ENCODE measurements at regions of chr10 and their contacts with region 1.

Region 1: DNA sequence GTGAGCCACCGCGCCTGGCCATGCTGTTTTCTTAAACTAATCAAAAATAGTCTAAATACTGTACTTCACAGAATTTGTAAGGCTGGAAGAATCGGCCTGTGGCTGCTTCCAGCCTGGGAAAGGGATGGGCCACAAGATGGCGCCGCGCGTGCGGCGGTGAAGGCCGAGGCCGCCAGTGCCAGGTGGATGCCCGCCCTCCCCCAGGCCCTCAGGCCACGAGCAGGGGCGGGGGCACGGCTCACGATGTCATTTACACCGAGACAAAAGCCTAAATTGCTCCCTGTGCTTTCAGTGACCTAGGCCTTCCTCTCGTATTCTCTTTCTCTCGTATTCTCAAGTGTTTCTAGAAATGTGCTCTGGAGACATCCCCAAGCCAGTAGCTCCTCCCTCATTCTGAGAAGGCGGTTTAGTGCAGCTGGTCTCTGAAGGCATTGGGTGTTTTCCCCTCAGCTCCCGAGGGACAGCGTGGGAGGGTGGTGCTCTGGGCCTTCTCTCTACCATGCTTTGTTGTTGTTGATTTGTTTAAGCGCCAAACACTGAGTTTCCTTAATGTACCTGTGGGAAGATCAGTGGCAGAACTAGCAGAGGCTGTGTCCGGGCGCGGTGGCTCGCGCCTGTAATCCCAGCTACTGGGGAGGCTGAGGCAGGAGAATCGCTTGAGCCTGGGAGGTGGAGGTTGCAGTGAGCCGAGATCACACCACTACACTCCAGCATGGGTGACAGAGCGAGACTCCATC is 68.4 kb downstream of the CDC123 start:
- DNase-seq: peak; percentile 73 to 86
- H3K4me3 ChIP-seq: peak overlapping the region; percentile 31; the same call in 1 of the 2 replicates
- H3K27ac ChIP-seq: peak overlapping the region; percentile 68
- H3K4me1 ChIP-seq: peaks cover 30% of the 10 kb centered on the region
- H3K27me3 ChIP-seq: no peaks in the 10 kb centered on the region
- CTCF ChIP-seq: peak; percentile 81

Region 2: GRCh38 chr10:12322583-12323131 is 58.3 kb after region 1 on chr10:
- CTCF ChIA-PET with region 1: no interaction called
- POLR2A ChIA-PET with region 1: no interaction called
- intact Hi-C with region 1: no loop called
- DNase-seq: no peak
- H3K4me3 ChIP-seq: no peak overlapping the region
- H3K27ac ChIP-seq: no peak overlapping the region
- H3K4me1 ChIP-seq: peaks cover 22% of the 10 kb centered on the region
- H3K27me3 ChIP-seq: no peaks in the 10 kb centered on the region
- CTCF ChIP-seq: no peak

Region 3: DNA sequence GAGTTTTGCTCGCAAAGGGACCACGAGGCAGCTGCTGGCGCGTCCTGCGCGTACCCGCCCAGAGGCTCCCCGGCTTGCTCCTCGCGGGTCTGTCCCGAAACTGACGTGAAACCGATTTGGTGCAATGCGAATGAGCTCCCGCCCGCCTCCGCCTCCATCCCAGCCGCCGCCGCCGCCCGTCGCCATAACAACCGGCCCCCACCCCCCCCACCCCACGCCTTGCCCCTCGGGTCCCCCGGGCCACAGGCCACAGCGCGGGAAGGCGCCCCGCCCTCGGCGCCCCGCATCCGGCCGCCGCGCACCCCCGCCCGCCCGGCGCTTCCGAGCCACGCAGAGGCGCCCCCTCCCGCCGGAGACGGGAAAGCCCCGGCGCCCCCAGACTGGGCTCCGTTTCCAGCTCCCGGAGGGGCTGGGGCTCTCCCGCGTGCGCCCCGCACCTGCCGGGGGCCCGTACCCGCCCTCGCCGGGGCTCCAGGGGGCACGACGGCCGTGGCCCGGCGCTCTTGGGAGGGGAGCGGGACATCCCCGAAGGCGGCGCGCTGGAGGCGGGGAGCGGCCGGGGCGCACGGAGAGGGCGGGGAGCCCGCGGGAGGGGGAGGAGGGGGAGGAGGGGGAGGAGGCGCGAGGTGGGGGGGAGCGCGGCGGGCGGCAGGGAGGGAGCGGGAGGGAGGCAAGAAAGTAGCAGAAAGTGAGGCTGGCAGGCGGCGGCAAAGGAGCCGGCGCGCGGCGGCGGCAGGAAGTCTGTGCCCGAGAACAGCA is 84.7 kb after region 1 on chr10 and contains the start of gene CAMK1D:
- CTCF ChIA-PET with region 1: interaction called, 4 read pairs
- POLR2A ChIA-PET with region 1: no interaction called
- intact Hi-C with region 1: loop called (anchors 1 kb)
- DNase-seq: peak; percentile 46 to 70
- H3K4me3 ChIP-seq: peak within 1 kb of the TSS; percentile 90
- H3K27ac ChIP-seq: 0 out of 2 replicates have a peak within 1 kb of the TSS, but pooled peaks have one; percentile 1
- H3K4me1 ChIP-seq: peaks cover 22% of the 10 kb centered on the region
- H3K27me3 ChIP-seq: no peaks in the 10 kb centered on the region
- CTCF ChIP-seq: no peak
- total RNA-seq, gene CAMK1D: 6.0 and 8.8 TPM in 2 replicates

Region 4: DNA sequence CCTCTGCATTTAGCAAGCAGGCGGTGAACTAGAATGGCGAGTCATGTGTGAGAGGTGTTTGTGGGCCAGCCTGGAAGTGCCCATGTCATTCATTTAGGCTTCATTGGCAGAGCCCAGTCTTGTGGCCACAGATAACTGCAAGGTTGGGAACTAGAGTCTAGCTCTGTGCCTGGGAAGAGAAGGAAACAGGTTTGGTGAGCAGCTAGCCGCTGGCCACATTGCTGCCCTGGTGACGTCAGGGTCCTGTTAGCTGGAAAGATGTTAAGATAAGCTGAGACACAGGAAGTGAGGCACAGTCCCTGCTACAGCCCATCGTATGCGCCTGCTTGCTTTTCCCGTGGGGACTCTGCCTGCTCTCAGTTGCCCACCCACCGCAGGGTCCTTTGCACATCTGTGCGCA is 270.5 kb after region 1 on chr10:
- CTCF ChIA-PET with region 1: no interaction called
- POLR2A ChIA-PET with region 1: no interaction called
- intact Hi-C with region 1: no loop called
- DNase-seq: peak; percentile 47 to 73
- H3K4me3 ChIP-seq: no peak overlapping the region
- H3K27ac ChIP-seq: peak overlapping the region; percentile 31; the same call in 1 of the 2 replicates
- H3K4me1 ChIP-seq: 0 out of 2 replicates have a peak, but pooled peaks cover 5% of the 10 kb centered on the region
- H3K27me3 ChIP-seq: no peaks in the 10 kb centered on the region
- CTCF ChIP-seq: no peak

Region 5: DNA sequence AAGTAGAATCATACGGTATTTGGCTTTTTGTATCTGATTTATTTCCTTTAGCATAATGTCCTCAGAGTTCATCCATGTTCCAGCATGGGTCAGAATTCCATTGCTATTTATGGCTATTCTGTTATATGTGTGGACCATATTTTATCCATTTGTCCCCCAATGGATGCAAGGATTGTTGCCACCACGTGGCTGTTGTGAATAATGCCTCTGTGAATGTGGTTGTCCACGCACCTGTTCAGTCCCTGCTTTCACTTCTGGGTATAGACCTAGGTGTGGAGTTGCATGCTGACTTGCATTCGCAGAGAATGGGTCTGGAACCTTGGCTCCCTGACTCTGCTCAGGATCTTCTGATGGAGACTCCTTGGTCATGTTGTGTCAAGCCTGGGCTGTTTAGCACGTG is 284.9 kb after region 1 on chr10:
- CTCF ChIA-PET with region 1: no interaction called
- POLR2A ChIA-PET with region 1: no interaction called
- intact Hi-C with region 1: loop called (anchors 5 kb)
- DNase-seq: no peak
- H3K4me3 ChIP-seq: no peak overlapping the region
- H3K27ac ChIP-seq: no peak overlapping the region
- H3K4me1 ChIP-seq: no peaks in the 10 kb centered on the region
- H3K27me3 ChIP-seq: no peaks in the 10 kb centered on the region
- CTCF ChIP-seq: no peak

Region 6: DNA sequence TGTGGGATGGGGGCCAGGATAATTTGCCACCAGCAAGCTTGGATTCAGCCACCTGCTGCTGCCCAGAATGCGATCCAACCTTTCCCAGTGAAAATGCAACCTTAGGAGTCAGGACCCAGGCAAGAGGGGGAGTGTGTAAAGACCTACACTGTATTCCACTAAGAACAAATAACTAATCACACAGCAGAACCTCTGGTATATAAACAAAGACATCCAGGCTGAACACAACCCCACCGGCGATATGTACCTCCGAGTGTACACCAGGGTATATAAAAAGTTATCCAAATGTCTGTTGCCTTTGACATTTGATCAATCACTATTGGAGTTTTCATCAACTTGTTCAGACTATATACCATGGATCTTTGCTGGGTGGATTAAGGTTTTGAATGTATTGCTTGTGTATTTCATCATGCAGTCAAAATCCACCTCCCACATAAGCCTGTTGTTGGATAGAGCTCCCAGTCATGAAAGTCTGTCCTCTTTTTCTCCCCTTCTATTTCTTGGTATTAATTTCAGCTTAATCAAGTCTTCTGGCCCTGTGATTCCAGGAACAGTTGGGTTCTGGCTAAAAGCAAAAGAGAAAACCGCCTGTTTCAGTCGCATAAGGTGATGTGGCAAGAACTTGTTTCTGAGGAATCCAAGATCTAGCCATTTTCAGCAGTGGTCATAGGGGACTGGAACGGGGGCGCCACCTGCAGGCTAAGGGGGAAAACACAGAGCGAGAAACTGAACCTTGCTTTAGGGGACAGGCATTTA is 446.4 kb after region 1 on chr10:
- CTCF ChIA-PET with region 1: interaction called, 5 read pairs
- POLR2A ChIA-PET with region 1: interaction called, 4 read pairs
- intact Hi-C with region 1: loop called (anchors 1 kb)
- DNase-seq: peak; percentile 67 to 76
- H3K4me3 ChIP-seq: no peak overlapping the region
- H3K27ac ChIP-seq: peak overlapping the region; percentile 93
- H3K4me1 ChIP-seq: peaks cover 58% of the 10 kb centered on the region
- H3K27me3 ChIP-seq: no peaks in the 10 kb centered on the region
- CTCF ChIP-seq: peak; percentile 88

Region 7: GRCh38 chr10:13074561-13075451 is 810.4 kb after region 1 on chr10:
- CTCF ChIA-PET with region 1: no interaction called
- POLR2A ChIA-PET with region 1: no interaction called
- intact Hi-C with region 1: loop called (anchors 1 kb)
- DNase-seq: peak; percentile 37 to 64
- H3K4me3 ChIP-seq: no peak overlapping the region
- H3K27ac ChIP-seq: no peak overlapping the region
- H3K4me1 ChIP-seq: no peaks in the 10 kb centered on the region
- H3K27me3 ChIP-seq: no peaks in the 10 kb centered on the region
- CTCF ChIP-seq: peak; percentile 81